Gastrocnemius medialis (tissue), 4 donors: ENCODE measurements at regions of chr11 and their contacts with region 1.

Region 1: GRCh38 chr11:17722000-17722643 is 2.8 kb downstream of the MYOD1 start:
- DNase-seq: peak; percentile 54 to 76
- ATAC-seq: peak in 1 of 2 donors; percentile 21
- H3K4me3 ChIP-seq: peak overlapping the region; percentile 61 to 69 (median 65)
- H3K27ac ChIP-seq: peak overlapping the region; percentile 93 to 99 (median 96)
- H3K4me1 ChIP-seq: peaks cover 8 to 21% of the 10 kb centered on the region in 2 donors
- H3K27me3 ChIP-seq: no peaks in the 10 kb centered on the region
- CTCF ChIP-seq: peak; percentile 52 to 69 (median 57)
- POLR2A ChIP-seq: no peak

Region 2: DNA sequence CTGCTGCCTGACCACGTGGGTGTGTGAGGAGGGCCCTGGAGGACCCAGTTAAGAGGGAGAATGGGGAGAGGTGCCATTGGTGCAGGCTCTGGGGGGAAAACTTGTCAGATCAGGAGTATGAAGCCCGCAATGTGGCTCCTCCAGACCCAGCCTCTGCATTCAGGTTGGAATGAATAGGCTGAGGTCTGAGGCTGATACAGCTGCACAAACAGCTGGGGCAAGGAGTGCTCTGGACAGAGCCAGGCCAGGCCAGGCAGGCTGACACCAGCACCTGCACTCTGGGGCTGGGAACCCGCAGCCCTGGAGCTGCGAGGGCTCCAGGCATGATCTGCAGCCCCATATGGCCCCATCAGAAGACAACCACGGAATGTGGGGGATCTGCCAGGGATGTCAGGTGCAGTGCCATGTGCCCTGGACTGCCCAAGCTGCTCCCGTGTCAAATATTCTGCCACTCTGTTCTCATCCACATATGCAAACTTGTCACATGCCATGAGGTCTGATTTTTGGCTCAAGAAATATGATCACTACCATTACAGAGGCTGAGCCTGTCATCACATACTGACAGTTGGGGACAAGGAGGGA is 306.5 kb before region 1 on chr11:
- in situ Hi-C with region 1: no loop called
- intact Hi-C with region 1: loop called (anchors 5 kb)
- DNase-seq: peak; percentile 88 to 90
- ATAC-seq: peak; percentile 92 to 96
- H3K4me3 ChIP-seq: no peak overlapping the region
- H3K27ac ChIP-seq: peak overlapping the region; percentile 85 to 89 (median 88)
- H3K4me1 ChIP-seq: peaks cover 21 to 29% of the 10 kb centered on the region in 2 donors
- H3K27me3 ChIP-seq: no peaks in the 10 kb centered on the region
- CTCF ChIP-seq: no peak
- POLR2A ChIP-seq: peak; percentile 26 to 56

Region 3: DNA sequence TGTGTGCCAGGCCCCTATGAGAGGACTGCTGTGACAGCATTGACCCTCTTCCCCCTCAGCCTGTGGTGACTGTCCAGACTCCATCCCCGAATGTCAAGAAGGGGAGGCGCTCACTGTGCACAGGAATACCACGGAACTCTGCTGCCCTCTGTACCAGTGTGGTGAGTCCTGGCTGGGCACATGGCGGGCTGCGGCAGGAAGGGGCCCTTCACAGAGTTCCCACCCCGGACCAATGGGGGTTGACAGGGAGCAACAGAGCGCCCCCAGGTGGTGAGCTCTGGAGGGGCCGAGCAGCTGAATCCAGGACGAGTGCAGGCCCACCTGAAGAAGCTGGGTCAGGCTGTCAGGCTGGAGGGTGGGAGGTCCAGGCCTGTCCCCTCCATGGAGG is 86.6 kb before region 1 on chr11:
- in situ Hi-C with region 1: loop called in 1 of 4 experiments (anchors 10 kb)
- intact Hi-C with region 1: loop called (anchors 1 kb)
- DNase-seq: no peak
- ATAC-seq: no peak
- H3K4me3 ChIP-seq: no peak overlapping the region
- H3K27ac ChIP-seq: no peak overlapping the region
- H3K4me1 ChIP-seq: no peaks in the 10 kb centered on the region
- H3K27me3 ChIP-seq: no peaks in the 10 kb centered on the region
- CTCF ChIP-seq: no peak
- POLR2A ChIP-seq: no peak

Region 4: DNA sequence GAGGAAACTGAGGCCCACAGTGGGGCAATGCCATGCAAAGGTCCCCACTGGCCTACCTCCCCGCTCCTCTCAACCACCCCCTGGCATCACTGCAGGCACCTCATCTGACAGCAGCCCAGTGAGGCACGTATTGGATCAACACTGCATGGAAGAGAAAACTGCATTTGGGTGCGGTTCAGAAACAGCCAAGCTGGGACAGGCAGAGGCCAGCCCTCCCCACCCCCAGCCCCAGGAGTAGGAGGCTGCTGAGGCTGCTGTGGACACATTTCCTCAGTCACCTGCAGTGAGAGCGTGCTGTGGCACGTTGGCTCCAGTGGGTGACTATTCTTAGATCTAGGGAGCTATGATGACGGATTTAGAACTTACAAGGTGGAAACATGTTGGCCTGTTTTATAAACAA is 76.1 kb after region 1 on chr11:
- in situ Hi-C with region 1: no loop called
- intact Hi-C with region 1: loop called (anchors 2 kb)
- DNase-seq: peak; percentile 90 to 95
- ATAC-seq: peak; percentile 90 to 91
- H3K4me3 ChIP-seq: peak overlapping the region in 2 of 4 donors; percentile 12 to 35
- H3K27ac ChIP-seq: peak overlapping the region; percentile 90 to 96 (median 94)
- H3K4me1 ChIP-seq: peaks cover 50 to 52% of the 10 kb centered on the region in 2 donors
- H3K27me3 ChIP-seq: no peaks in the 10 kb centered on the region
- CTCF ChIP-seq: no peak
- POLR2A ChIP-seq: peak in 1 of 2 donors; percentile 35

Region 5: DNA sequence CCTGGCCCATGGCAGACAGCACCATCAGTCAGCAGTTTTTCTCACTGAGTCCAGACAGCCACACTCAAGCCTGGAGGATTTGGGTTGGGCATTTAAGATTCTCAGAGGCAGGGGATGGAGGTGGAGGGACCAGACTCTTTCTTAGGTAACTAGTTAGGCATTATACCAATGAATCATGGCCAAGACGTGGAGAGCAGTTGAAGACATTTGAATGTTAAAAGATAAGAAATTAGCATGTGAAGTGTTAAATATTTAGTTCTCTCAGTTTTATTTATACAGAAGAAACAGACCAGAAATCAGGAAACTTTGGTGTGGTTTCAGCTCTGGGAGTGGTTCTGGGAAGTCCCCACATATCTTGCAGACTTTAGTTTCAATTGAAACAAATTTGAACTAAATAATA is 610.2 kb after region 1 on chr11:
- in situ Hi-C with region 1: no loop called
- intact Hi-C with region 1: no loop called
- DNase-seq: no peak
- ATAC-seq: no peak
- H3K4me3 ChIP-seq: no peak overlapping the region
- H3K27ac ChIP-seq: no peak overlapping the region
- H3K4me1 ChIP-seq: no peaks in the 10 kb centered on the region
- H3K27me3 ChIP-seq: no peaks in the 10 kb centered on the region
- CTCF ChIP-seq: no peak
- POLR2A ChIP-seq: no peak

Region 6: GRCh38 chr11:18383388-18384156 is 661.5 kb after region 1 on chr11:
- in situ Hi-C with region 1: no loop called
- intact Hi-C with region 1: no loop called
- DNase-seq: peak; percentile 81 to 96
- ATAC-seq: peak; percentile 92 to 96
- H3K4me3 ChIP-seq: peak overlapping the region in 3 of 4 donors; percentile 6 to 32 (median 30)
- H3K27ac ChIP-seq: peak overlapping the region; percentile 90 to 100 (median 94)
- H3K4me1 ChIP-seq: peaks cover 29 to 30% of the 10 kb centered on the region in 2 donors
- H3K27me3 ChIP-seq: no peaks in the 10 kb centered on the region
- CTCF ChIP-seq: no peak
- POLR2A ChIP-seq: no peak